WTC11 (cell line): ENCODE measurements at regions of chr11 and their contacts with region 1.

Region 1: DNA sequence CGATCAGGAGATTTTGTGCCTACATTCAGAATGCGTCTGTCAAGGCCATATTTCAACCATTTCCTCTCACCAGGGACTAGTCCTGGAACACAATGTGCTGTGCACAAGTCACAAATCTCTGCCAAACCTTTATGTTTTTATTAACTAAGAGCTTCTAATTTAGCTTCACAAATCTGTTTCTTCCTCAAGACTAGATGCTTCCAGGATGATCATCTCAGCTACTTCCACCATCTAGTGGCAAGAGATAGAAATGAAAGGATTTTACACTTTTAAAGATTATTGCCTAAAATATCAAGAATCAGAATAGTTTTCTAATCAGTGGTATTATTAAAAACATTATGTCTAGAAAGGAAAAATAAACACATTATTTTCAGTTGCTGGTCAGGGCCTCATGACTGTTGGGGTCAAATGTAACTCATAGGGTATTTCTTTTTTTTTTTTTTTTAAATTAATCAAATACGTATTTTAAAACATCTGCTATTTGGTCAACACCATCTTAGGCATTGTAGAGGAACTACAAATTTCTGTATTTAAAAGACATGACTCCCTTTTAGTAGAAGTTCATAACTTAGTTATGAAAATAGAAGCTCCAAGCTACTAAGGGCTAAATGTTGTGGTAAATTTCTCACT is 1102.6 kb downstream of the DLG2 start:
- DNase-seq: no peak
- ATAC-seq: no peak
- H3K4me3 Mint-ChIP-seq: no peak overlapping the region
- H3K27ac Mint-ChIP-seq: no peak overlapping the region
- H3K4me1 Mint-ChIP-seq: peaks cover 18% of the 10 kb centered on the region
- H3K27me3 Mint-ChIP-seq: no peaks in the 10 kb centered on the region
- CTCF ChIP-seq: peak; percentile 49; the same call in 1 of the 2 replicates

Region 2: DNA sequence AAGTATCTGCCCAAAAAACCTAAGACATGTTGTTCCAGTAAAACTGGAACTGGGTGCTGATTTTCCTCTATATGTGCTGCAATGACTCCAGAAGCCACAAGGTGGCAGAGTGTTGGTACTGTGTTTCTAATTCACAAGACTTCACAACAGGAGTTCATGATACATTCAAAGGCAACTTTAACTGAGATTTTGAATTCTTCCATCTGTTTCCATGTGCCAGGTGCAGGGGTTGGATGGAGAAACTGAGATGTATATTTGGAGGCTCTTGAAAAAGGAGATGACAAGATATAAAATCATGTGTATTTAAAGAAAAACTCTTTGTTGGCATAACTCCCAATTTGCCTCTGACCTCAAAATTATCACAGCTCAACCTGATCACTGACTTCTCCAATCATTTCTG is 139.8 kb before region 1 on chr11:
- CTCF ChIA-PET with region 1: interaction called, 48 read pairs
- POLR2A ChIA-PET with region 1: no interaction called
- DNase-seq: peak; percentile 56
- ATAC-seq: peak; percentile 44; the same call in 1 of the 2 replicates
- H3K4me3 Mint-ChIP-seq: no peak overlapping the region
- H3K27ac Mint-ChIP-seq: no peak overlapping the region
- H3K4me1 Mint-ChIP-seq: 0 out of 2 replicates have a peak, but pooled peaks cover 5% of the 10 kb centered on the region
- H3K27me3 Mint-ChIP-seq: no peaks in the 10 kb centered on the region
- CTCF ChIP-seq: peak; percentile 60; the same call in 1 of the 2 replicates

Region 3: GRCh38 chr11:84390441-84391078 is 134.0 kb before region 1 on chr11:
- CTCF ChIA-PET with region 1: interaction called, 48 read pairs
- POLR2A ChIA-PET with region 1: no interaction called
- DNase-seq: peak; percentile 43
- ATAC-seq: peak; percentile 99
- H3K4me3 Mint-ChIP-seq: no peak overlapping the region
- H3K27ac Mint-ChIP-seq: peak overlapping the region; percentile 64
- H3K4me1 Mint-ChIP-seq: peaks cover 18% of the 10 kb centered on the region
- H3K27me3 Mint-ChIP-seq: no peaks in the 10 kb centered on the region
- CTCF ChIP-seq: peak; percentile 18; the same call in 1 of the 2 replicates

Region 4: DNA sequence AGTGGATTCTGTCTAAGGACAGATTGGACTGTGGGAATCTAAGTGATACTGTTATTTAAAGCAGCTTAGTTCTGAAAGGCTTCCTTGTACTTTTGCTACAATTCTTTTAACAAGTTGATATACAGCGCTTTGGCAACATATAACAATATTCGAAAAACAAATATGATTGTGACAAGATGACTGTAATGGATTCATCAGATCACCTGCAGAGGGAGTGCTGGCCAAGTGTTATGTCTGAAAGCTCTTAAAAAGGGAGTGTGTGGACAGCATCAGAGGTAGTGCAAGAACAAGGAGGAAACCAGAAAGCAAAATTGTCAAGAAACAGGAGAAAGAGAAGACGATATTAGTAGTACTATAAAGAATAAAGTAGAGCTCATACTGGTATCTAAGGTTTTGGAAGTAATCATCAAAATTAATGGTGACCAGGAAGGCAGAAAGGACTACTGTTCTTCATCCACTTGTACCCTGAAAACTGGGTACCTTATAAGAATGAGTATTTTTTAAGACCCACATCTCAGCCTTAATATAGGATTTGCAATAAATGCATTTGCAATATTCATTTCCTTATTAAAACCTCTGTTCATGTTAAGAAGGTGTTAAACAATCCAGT is 126.4 kb before region 1 on chr11:
- CTCF ChIA-PET with region 1: interaction called, 23 read pairs
- POLR2A ChIA-PET with region 1: interaction called, 3 read pairs
- DNase-seq: peak; percentile 21
- ATAC-seq: peak; percentile 73
- H3K4me3 Mint-ChIP-seq: no peak overlapping the region
- H3K27ac Mint-ChIP-seq: no peak overlapping the region
- H3K4me1 Mint-ChIP-seq: peaks cover 10% of the 10 kb centered on the region
- H3K27me3 Mint-ChIP-seq: no peaks in the 10 kb centered on the region
- CTCF ChIP-seq: no peak; the same call in 1 of the 2 replicates

Region 5: DNA sequence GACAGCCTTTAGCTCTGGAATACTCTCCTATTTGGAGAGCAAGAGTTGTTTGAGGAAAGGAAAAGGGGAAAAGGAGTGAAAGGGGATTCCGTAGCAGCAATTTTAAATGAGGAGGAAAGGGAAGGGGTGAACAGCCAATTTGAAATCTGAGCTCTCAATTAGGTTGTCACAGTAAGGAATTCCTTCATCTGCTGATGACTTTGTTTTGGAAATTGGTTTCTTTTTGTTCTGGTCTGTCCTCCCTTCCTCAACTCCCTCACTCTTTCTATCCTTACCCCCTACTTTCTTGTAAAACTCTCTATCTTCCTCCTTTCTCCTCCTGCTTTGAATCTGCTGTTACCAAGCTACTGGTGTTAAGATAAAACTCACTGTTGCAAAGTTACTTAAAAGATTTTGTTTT is 53.0 kb before region 1 on chr11:
- CTCF ChIA-PET with region 1: interaction called, 10 read pairs
- POLR2A ChIA-PET with region 1: no interaction called
- DNase-seq: no peak
- ATAC-seq: peak; percentile 93
- H3K4me3 Mint-ChIP-seq: peak overlapping the region; percentile 29
- H3K27ac Mint-ChIP-seq: peak overlapping the region; percentile 71
- H3K4me1 Mint-ChIP-seq: peaks cover 45% of the 10 kb centered on the region
- H3K27me3 Mint-ChIP-seq: no peaks in the 10 kb centered on the region
- CTCF ChIP-seq: no peak

Region 6: GRCh38 chr11:84512084-84512483 is 12.5 kb before region 1 on chr11:
- CTCF ChIA-PET with region 1: interaction called, 10 read pairs
- POLR2A ChIA-PET with region 1: no interaction called
- DNase-seq: no peak
- ATAC-seq: no peak
- H3K4me3 Mint-ChIP-seq: no peak overlapping the region
- H3K27ac Mint-ChIP-seq: no peak overlapping the region
- H3K4me1 Mint-ChIP-seq: peaks cover 19% of the 10 kb centered on the region
- H3K27me3 Mint-ChIP-seq: no peaks in the 10 kb centered on the region
- CTCF ChIP-seq: no peak

Region 7: GRCh38 chr11:84543367-84544159 is 19.0 kb after region 1 on chr11:
- CTCF ChIA-PET with region 1: interaction called, 23 read pairs
- POLR2A ChIA-PET with region 1: no interaction called
- DNase-seq: peak; percentile 80
- ATAC-seq: peak; percentile 95
- H3K4me3 Mint-ChIP-seq: peak overlapping the region; percentile 55
- H3K27ac Mint-ChIP-seq: peak overlapping the region; percentile 91
- H3K4me1 Mint-ChIP-seq: peaks cover 43% of the 10 kb centered on the region
- H3K27me3 Mint-ChIP-seq: no peaks in the 10 kb centered on the region
- CTCF ChIP-seq: no peak